Activated CD8-positive, alpha-beta T cell treated with anti-CD3 and anti-CD28 coated beads for 36 hours (primary cell): ENCODE measurements at regions of chr18 and their contacts with region 1.

Region 1: GRCh38 chr18:31722369-31722957 is 38.1 kb upstream of the B4GALT6 start:
- DNase-seq: peak; percentile 90
- ATAC-seq: peak; percentile 96
- H3K4me3 Mint-ChIP-seq: no peak overlapping the region
- H3K27ac Mint-ChIP-seq: no peak overlapping the region
- H3K4me1 Mint-ChIP-seq: peaks cover 6% of the 10 kb centered on the region
- H3K27me3 Mint-ChIP-seq: peaks cover 32% of the 10 kb centered on the region
- CTCF ChIP-seq: peak; percentile 78

Region 2: GRCh38 chr18:31555971-31556747 is 166.3 kb before region 1 on chr18:
- CTCF ChIA-PET with region 1: interaction called, 94 read pairs
- POLR2A ChIA-PET with region 1: no interaction called
- intact Hi-C with region 1: loop called (anchors 1 kb)
- DNase-seq: peak; percentile 49
- ATAC-seq: peak; percentile 58
- H3K4me3 Mint-ChIP-seq: no peak overlapping the region
- H3K27ac Mint-ChIP-seq: no peak overlapping the region
- H3K4me1 Mint-ChIP-seq: no peaks in the 10 kb centered on the region
- H3K27me3 Mint-ChIP-seq: peaks cover 3% of the 10 kb centered on the region
- CTCF ChIP-seq: peak; percentile 80

Region 3: DNA sequence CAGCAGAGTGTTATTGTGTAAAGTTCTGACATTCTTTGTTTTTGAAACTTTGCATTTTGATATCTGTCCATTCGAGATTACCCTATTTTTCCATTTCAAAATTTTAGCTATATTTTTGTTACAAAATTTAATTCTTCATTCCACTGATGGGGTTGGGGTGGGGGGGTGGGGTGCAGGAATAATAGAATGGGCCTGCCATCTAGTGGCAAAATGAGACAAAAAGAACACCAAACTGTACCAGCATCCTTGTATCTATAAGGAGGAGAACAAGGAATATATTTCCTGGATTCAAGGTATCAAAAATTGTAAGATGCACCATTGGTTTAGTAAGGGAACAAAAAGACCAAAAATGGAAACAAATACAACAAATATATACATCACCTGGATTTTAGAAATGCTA is 158.7 kb before region 1 on chr18:
- CTCF ChIA-PET with region 1: interaction called, 94 read pairs
- POLR2A ChIA-PET with region 1: no interaction called
- intact Hi-C with region 1: no loop called
- DNase-seq: no peak
- ATAC-seq: no peak
- H3K4me3 Mint-ChIP-seq: no peak overlapping the region
- H3K27ac Mint-ChIP-seq: no peak overlapping the region
- H3K4me1 Mint-ChIP-seq: no peaks in the 10 kb centered on the region
- H3K27me3 Mint-ChIP-seq: peaks cover 4% of the 10 kb centered on the region
- CTCF ChIP-seq: peak; percentile 12

Region 4: GRCh38 chr18:31685097-31686082 is 37.1 kb before region 1 on chr18:
- CTCF ChIA-PET with region 1: interaction called, 17 read pairs
- POLR2A ChIA-PET with region 1: no interaction called
- intact Hi-C with region 1: no loop called
- DNase-seq: peak; percentile 64
- ATAC-seq: peak; percentile 80
- H3K4me3 Mint-ChIP-seq: peak overlapping the region; percentile 74
- H3K27ac Mint-ChIP-seq: peak overlapping the region; percentile 74
- H3K4me1 Mint-ChIP-seq: peaks cover 14% of the 10 kb centered on the region
- H3K27me3 Mint-ChIP-seq: peaks cover 52% of the 10 kb centered on the region
- CTCF ChIP-seq: no peak

Region 5: GRCh38 chr18:31702449-31702848 is 20.0 kb before region 1 on chr18:
- CTCF ChIA-PET with region 1: interaction called, 26 read pairs
- POLR2A ChIA-PET with region 1: no interaction called
- intact Hi-C with region 1: no loop called
- DNase-seq: no peak
- ATAC-seq: no peak
- H3K4me3 Mint-ChIP-seq: no peak overlapping the region
- H3K27ac Mint-ChIP-seq: no peak overlapping the region
- H3K4me1 Mint-ChIP-seq: peaks cover 3% of the 10 kb centered on the region
- H3K27me3 Mint-ChIP-seq: no peaks in the 10 kb centered on the region
- CTCF ChIP-seq: no peak

Region 6: GRCh38 chr18:31707815-31708214 is 14.6 kb before region 1 on chr18:
- CTCF ChIA-PET with region 1: interaction called, 26 read pairs
- POLR2A ChIA-PET with region 1: no interaction called
- intact Hi-C with region 1: no loop called
- DNase-seq: no peak
- ATAC-seq: no peak
- H3K4me3 Mint-ChIP-seq: no peak overlapping the region
- H3K27ac Mint-ChIP-seq: no peak overlapping the region
- H3K4me1 Mint-ChIP-seq: no peaks in the 10 kb centered on the region
- H3K27me3 Mint-ChIP-seq: no peaks in the 10 kb centered on the region
- CTCF ChIP-seq: no peak

Region 7: GRCh38 chr18:31741097-31741735 is 18.8 kb after region 1 on chr18:
- CTCF ChIA-PET with region 1: interaction called, 13 read pairs
- POLR2A ChIA-PET with region 1: no interaction called
- intact Hi-C with region 1: no loop called
- DNase-seq: peak; percentile 79
- ATAC-seq: peak; percentile 39
- H3K4me3 Mint-ChIP-seq: no peak overlapping the region
- H3K27ac Mint-ChIP-seq: no peak overlapping the region
- H3K4me1 Mint-ChIP-seq: no peaks in the 10 kb centered on the region
- H3K27me3 Mint-ChIP-seq: no peaks in the 10 kb centered on the region
- CTCF ChIP-seq: peak; percentile 91